Activated CD4-positive, alpha-beta memory T cell treated with anti-CD3 and anti-CD28 coated beads for 36 hours (primary cell): ENCODE measurements at regions of chr2 and their contacts with region 1.

Region 1: GRCh38 chr2:131801210-131801744 is 273.6 kb downstream of the CCDC74A start:
- DNase-seq: no peak
- H3K4me3 Mint-ChIP-seq: no peak overlapping the region
- H3K27ac Mint-ChIP-seq: no peak overlapping the region
- H3K4me1 Mint-ChIP-seq: no peaks in the 10 kb centered on the region
- H3K27me3 Mint-ChIP-seq: peaks cover 7% of the 10 kb centered on the region

Region 2: GRCh38 chr2:131413148-131413747 is 388.0 kb before region 1 on chr2:
- CTCF ChIA-PET with region 1: interaction called, 5 read pairs
- POLR2A ChIA-PET with region 1: no interaction called
- intact Hi-C with region 1: loop called (anchors 10 kb)
- DNase-seq: no peak
- H3K4me3 Mint-ChIP-seq: no peak overlapping the region
- H3K27ac Mint-ChIP-seq: no peak overlapping the region
- H3K4me1 Mint-ChIP-seq: no peaks in the 10 kb centered on the region
- H3K27me3 Mint-ChIP-seq: peaks cover 49% of the 10 kb centered on the region

Region 3: DNA sequence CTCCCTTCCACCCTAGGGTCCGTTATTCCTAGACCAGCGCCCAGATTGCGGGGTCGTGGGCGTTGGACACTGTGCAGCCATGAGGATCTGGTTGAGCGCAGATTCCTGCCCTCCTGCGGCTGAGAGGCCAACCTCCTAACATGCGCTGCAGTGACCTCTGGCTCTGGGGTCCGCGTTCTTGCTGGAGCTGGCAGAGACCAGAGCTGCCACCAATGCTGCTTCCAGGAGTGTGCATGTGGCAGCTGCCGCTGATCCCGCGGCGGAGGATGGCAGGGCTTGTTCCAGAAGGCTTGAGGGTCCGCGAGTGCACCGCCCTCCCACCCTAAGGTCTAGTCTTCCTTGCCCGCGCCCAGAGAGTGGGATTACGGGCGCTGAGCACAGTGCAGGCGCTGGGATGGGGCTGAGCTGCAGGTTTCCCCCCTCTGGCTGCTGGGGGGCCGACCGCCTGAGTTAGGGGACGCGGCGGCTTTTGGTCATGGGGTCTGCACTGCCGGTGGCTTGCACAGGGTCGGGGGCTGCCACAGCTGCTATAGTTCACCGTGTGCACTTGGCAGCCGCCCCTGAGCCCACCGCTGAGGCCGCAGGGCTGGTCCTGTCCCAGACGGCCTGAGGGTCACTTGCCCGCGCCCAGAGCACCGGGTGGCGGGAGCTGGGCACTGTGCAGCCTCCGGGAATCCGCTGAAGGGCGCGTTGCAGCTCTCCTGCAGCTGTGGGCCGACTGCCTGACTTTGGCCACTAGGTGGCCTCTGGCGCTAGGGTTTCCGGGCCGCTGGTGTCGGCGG is 127.7 kb before region 1 on chr2:
- CTCF ChIA-PET with region 1: interaction called, 37 read pairs
- POLR2A ChIA-PET with region 1: no interaction called
- intact Hi-C with region 1: loop called (anchors 2 kb)
- DNase-seq: peak; percentile 82
- H3K4me3 Mint-ChIP-seq: peak overlapping the region; percentile 20
- H3K27ac Mint-ChIP-seq: no peak overlapping the region
- H3K4me1 Mint-ChIP-seq: peaks cover 2% of the 10 kb centered on the region
- H3K27me3 Mint-ChIP-seq: peaks cover 27% of the 10 kb centered on the region

Region 4: GRCh38 chr2:131724019-131724418 is 77.3 kb before region 1 on chr2:
- CTCF ChIA-PET with region 1: no interaction called
- POLR2A ChIA-PET with region 1: no interaction called
- intact Hi-C with region 1: no loop called
- DNase-seq: no peak
- H3K4me3 Mint-ChIP-seq: no peak overlapping the region
- H3K27ac Mint-ChIP-seq: no peak overlapping the region
- H3K4me1 Mint-ChIP-seq: no peaks in the 10 kb centered on the region
- H3K27me3 Mint-ChIP-seq: peaks cover 1% of the 10 kb centered on the region